CD4-positive, alpha-beta T cell (primary cell): ENCODE measurements at regions of chr15 and their contacts with region 1.

Region 1: DNA sequence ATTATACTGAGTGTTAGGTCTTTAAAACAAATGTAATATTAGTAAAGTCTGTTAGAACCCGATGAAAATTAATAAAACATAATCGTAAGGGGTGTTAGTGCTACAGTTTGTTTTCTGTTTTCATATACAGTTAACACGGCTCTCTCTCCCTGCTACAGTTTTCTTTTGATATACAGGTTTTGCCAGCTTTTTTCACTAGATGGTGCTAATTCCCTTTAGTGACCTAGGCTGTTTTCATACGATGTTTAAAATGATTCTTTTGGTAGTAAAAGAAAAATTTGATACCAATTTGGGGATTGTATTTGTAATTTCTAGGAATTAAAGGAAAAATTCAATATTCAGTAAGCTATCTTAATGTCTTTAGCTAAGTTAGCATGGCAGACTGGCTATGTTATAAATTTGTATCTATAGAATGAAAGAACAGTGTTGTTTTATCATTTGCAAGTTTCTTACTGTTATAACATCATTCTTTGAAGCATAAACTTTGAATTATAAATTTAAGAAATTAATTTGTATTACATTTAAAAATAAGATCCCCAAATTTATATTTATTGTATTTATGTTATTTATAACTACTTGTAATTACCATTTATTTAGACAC is 11.5 kb downstream of the APH1B start:
- DNase-seq: peak in 3 of 14 experiments; percentile 67 to 70 (median 69)
- ATAC-seq: peak; percentile 88
- H3K4me3 ChIP-seq: no peak overlapping the region
- H3K4me3 Mint-ChIP-seq: no peak overlapping the region
- H3K27ac ChIP-seq: no peak overlapping the region
- H3K27ac Mint-ChIP-seq: no peak overlapping the region
- H3K4me1 ChIP-seq: no peaks in the 10 kb centered on the region
- H3K4me1 Mint-ChIP-seq: peaks cover 9% of the 10 kb centered on the region
- H3K27me3 ChIP-seq: no peaks in the 10 kb centered on the region
- H3K27me3 Mint-ChIP-seq: no peaks in the 10 kb centered on the region
- CTCF ChIP-seq: peak; percentile 73

Region 2: DNA sequence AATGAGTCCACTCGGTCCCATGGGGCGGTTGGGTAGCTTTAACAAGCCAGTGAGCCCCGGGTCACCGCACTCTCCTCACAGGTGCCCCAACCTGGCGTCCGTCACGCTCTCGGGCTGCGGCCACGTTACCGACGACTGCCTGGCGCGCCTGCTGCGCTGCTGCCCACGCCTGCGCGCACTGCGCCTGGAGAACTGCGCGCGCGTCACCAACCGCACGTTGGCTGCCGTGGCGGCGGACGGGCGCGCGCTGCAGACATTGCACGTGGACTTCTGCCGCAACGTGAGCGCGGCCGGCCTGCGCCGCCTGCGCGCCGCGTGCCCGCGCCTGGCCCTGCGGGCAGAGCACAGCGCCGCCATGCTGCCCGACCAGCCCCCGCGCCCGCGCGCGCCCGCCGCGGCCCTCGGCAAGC is 311.7 kb after region 1 on chr15:
- CTCF ChIA-PET with region 1: no interaction called
- POLR2A ChIA-PET with region 1: interaction called, 3 read pairs
- intact Hi-C with region 1: loop called (anchors 5 to 10 kb)
- DNase-seq: peak; percentile 78 to 98 (median 88)
- ATAC-seq: peak; percentile 77
- H3K4me3 ChIP-seq: peak overlapping the region; percentile 79
- H3K4me3 Mint-ChIP-seq: peak overlapping the region; percentile 95
- H3K27ac ChIP-seq: peak overlapping the region; percentile 63 to 75
- H3K27ac Mint-ChIP-seq: peak overlapping the region; percentile 90
- H3K4me1 ChIP-seq: peaks cover 55% of the 10 kb centered on the region
- H3K4me1 Mint-ChIP-seq: peaks cover 73% of the 10 kb centered on the region
- H3K27me3 ChIP-seq: no peaks in the 10 kb centered on the region
- H3K27me3 Mint-ChIP-seq: no peaks in the 10 kb centered on the region
- CTCF ChIP-seq: no peak

Region 3: GRCh38 chr15:63735449-63735848 is 446.6 kb after region 1 on chr15:
- CTCF ChIA-PET with region 1: no interaction called
- POLR2A ChIA-PET with region 1: no interaction called
- intact Hi-C with region 1: loop called in 1 of 2 experiments (anchors 10 kb)
- DNase-seq: no peak
- ATAC-seq: no peak
- H3K4me3 ChIP-seq: no peak overlapping the region
- H3K4me3 Mint-ChIP-seq: no peak overlapping the region
- H3K27ac ChIP-seq: no peak overlapping the region
- H3K27ac Mint-ChIP-seq: no peak overlapping the region
- H3K4me1 ChIP-seq: no peaks in the 10 kb centered on the region
- H3K4me1 Mint-ChIP-seq: peaks cover 11% of the 10 kb centered on the region
- H3K27me3 ChIP-seq: no peaks in the 10 kb centered on the region
- H3K27me3 Mint-ChIP-seq: no peaks in the 10 kb centered on the region
- CTCF ChIP-seq: no peak

Region 4: GRCh38 chr15:64093627-64094417 is 804.9 kb after region 1 on chr15 and contains the start of gene CIAO2A:
- CTCF ChIA-PET with region 1: no interaction called
- POLR2A ChIA-PET with region 1: no interaction called
- intact Hi-C with region 1: no loop called
- DNase-seq: peak; percentile 79 to 97 (median 87)
- ATAC-seq: peak; percentile 71
- H3K4me3 ChIP-seq: peak within 1 kb of the TSS; percentile 73
- H3K4me3 Mint-ChIP-seq: peak within 1 kb of the TSS; percentile 94
- H3K27ac ChIP-seq: peak within 1 kb of the TSS; percentile 71 to 90
- H3K27ac Mint-ChIP-seq: peak within 1 kb of the TSS; percentile 93
- H3K4me1 ChIP-seq: peaks cover 61% of the 10 kb centered on the region
- H3K4me1 Mint-ChIP-seq: peaks cover 79% of the 10 kb centered on the region
- H3K27me3 ChIP-seq: no peaks in the 10 kb centered on the region
- H3K27me3 Mint-ChIP-seq: no peaks in the 10 kb centered on the region
- CTCF ChIP-seq: no peak
- total RNA-seq, gene CIAO2A: 10.9 to 12.2 TPM